Calu3 (cell line): ENCODE measurements at regions of chr16 and their contacts with region 1.

Region 1: DNA sequence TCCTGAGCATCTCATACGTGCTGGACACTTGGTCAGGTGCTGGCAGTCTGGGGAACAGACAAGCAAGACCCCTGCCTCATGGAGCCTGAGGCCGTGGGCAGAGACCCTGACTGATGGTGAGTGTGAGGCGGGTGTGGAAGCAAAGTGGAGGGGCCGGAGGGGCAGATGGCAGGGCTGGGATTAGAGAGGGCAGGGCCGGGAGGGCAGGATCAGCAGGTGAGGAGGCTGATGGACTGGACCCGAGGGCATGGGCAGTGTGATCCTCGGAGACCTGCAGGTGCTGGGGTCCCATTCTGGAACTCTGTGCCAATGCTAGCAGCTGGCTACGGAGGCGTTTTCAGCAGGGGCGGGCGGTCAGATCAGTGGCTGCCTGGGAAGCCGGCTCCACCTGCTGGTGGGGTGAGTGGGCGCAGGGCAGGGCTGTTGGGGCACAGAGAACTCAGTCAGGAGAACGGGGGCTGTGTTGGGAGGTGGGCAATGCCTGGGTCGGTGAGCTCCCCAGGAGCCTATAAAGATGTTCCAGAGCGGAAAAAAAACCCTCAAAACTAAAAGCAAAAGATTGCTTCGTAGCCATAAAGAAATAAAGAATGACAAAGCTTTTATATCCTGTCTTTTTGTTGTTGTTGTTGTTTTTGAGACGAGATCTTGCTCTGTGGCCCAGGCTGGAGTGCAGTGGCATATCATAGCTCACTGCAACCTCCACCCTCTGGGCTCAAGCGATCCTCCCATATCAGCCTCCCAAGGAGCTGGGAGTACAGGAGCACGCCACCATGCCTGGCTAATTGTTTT is 8.9 kb upstream of the C16orf74 start:
- DNase-seq: peak; percentile 85
- H3K4me3 Mint-ChIP-seq: no peak overlapping the region
- H3K27ac Mint-ChIP-seq: no peak overlapping the region
- H3K4me1 Mint-ChIP-seq: peaks cover 18% of the 10 kb centered on the region
- H3K27me3 Mint-ChIP-seq: peaks cover 74% of the 10 kb centered on the region
- CTCF ChIP-seq: peak; percentile 87

Region 2: GRCh38 chr16:85675251-85675927 is 84.4 kb before region 1 on chr16:
- CTCF ChIA-PET with region 1: interaction called, 4 read pairs
- intact Hi-C with region 1: loop called (anchors 5 kb)
- DNase-seq: no peak
- H3K4me3 Mint-ChIP-seq: no peak overlapping the region
- H3K27ac Mint-ChIP-seq: no peak overlapping the region
- H3K4me1 Mint-ChIP-seq: peaks cover 16% of the 10 kb centered on the region
- H3K27me3 Mint-ChIP-seq: no peaks in the 10 kb centered on the region
- CTCF ChIP-seq: peak; percentile 36

Region 3: GRCh38 chr16:85699628-85700027 is 60.2 kb before region 1 on chr16:
- CTCF ChIA-PET with region 1: no interaction called
- intact Hi-C with region 1: no loop called
- DNase-seq: no peak
- H3K4me3 Mint-ChIP-seq: no peak overlapping the region
- H3K27ac Mint-ChIP-seq: no peak overlapping the region
- H3K4me1 Mint-ChIP-seq: no peaks in the 10 kb centered on the region
- H3K27me3 Mint-ChIP-seq: peaks cover 29% of the 10 kb centered on the region
- CTCF ChIP-seq: no peak